GM23248 (cell line): ENCODE measurements at regions of chr14 and their contacts with region 1.

Region 1: GRCh38 chr14:63282997-63283883 is 35.5 kb downstream of the GPHB5 start:
- DNase-seq: peak; percentile 22
- H3K4me3 ChIP-seq: peak overlapping the region; percentile 54
- H3K27ac ChIP-seq: no peak overlapping the region
- H3K4me1 ChIP-seq: no peaks in the 10 kb centered on the region
- H3K27me3 ChIP-seq: no peaks in the 10 kb centered on the region

Region 2: DNA sequence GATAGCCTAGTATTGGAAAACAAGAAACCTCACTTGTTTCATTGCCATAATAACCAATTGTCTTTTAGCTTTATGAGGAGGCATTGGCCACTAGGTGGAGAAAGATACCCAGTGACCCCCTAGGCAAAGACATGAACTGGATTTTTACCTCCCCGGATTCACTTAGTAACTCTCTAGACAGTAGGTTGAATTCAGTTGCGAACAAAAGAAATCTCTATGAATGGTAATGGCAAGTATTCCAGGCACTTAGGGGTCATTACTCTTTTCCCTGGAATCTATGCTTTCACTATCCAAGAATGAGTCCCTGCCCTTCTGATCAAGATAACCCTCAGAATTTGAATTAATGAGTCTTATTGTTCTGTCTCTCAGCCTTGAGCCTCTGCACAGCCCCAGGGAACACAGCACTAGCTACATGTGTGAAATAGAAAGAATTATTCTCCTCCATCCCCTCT is 108.5 kb before region 1 on chr14:
- in situ Hi-C with region 1: loop called (anchors 10 kb)
- DNase-seq: peak; percentile 74
- H3K4me3 ChIP-seq: peak overlapping the region; percentile 23
- H3K27ac ChIP-seq: peak overlapping the region; percentile 29
- H3K4me1 ChIP-seq: peaks cover 31% of the 10 kb centered on the region
- H3K27me3 ChIP-seq: no peaks in the 10 kb centered on the region